ENCODE measurements at regions of chr15 and their contacts with region 1.

Region 1: GRCh38 chr15:89389841-89390603 is 55.4 kb upstream of the POLG start:
- DNase-seq: peak; percentile 83
- H3K4me3 ChIP-seq: no peak overlapping the region
- H3K27ac ChIP-seq: peak overlapping the region in 1 of 2 experiments; percentile 98; a peak in 2 of 4 replicates
- H3K4me1 ChIP-seq: peaks cover 0 to 61% of the 10 kb centered on the region in 2 experiments; a peak in 2 of 4 replicates
- H3K27me3 ChIP-seq: no peaks in the 10 kb centered on the region
- CTCF ChIP-seq: no peak
- EP300 ChIP-seq: peak in 1 of 2 experiments; percentile 40; a peak in 2 of 4 replicates
- RAD21 ChIP-seq: no peak

Region 2: GRCh38 chr15:89377836-89378295 is 12.2 kb before region 1 on chr15:
- CTCF ChIA-PET with region 1: interaction called, 10 read pairs
- POLR2A ChIA-PET with region 1: no interaction called
- DNase-seq: no peak
- H3K4me3 ChIP-seq: no peak overlapping the region
- H3K27ac ChIP-seq: no peak overlapping the region
- H3K4me1 ChIP-seq: peaks cover 0 to 34% of the 10 kb centered on the region in 2 experiments; a peak in 2 of 4 replicates
- H3K27me3 ChIP-seq: no peaks in the 10 kb centered on the region
- CTCF ChIP-seq: no peak
- EP300 ChIP-seq: no peak
- RAD21 ChIP-seq: no peak

Region 3: GRCh38 chr15:89416141-89416853 is 26.3 kb after region 1 on chr15:
- CTCF ChIA-PET with region 1: interaction called, 17 read pairs
- POLR2A ChIA-PET with region 1: no interaction called
- DNase-seq: peak; percentile 96
- H3K4me3 ChIP-seq: peak overlapping the region in 1 of 2 experiments; percentile 60; a peak in 1 of 4 replicates
- H3K27ac ChIP-seq: no peak overlapping the region
- H3K4me1 ChIP-seq: no peaks in the 10 kb centered on the region; a peak in 1 of 4 replicates
- H3K27me3 ChIP-seq: no peaks in the 10 kb centered on the region
- CTCF ChIP-seq: peak; percentile 90
- EP300 ChIP-seq: no peak
- RAD21 ChIP-seq: peak; percentile 57